ENCODE measurements at regions of chr12 and their contacts with region 1.

Region 1: GRCh38 chr12:100154474-100155247 is 12.0 kb upstream of the BLTP3B start:
- DNase-seq: peak; percentile 53 to 70 (median 57)
- H3K4me3 ChIP-seq: no peak overlapping the region
- H3K4me3 Mint-ChIP-seq: no peak overlapping the region
- H3K27ac ChIP-seq: no peak overlapping the region
- H3K27ac Mint-ChIP-seq: peak overlapping the region in 1 of 7 donors; percentile 39
- H3K4me1 ChIP-seq: no peaks in the 10 kb centered on the region
- H3K4me1 Mint-ChIP-seq: peaks cover 3 to 7% (median 4%) of the 10 kb centered on the region in 4 donors
- H3K27me3 ChIP-seq: no peaks in the 10 kb centered on the region
- H3K27me3 Mint-ChIP-seq: no peaks in the 10 kb centered on the region

Region 2: GRCh38 chr12:100105661-100106060 is 49.0 kb before region 1 on chr12:
- CTCF ChIA-PET with region 1: no interaction called
- POLR2A ChIA-PET with region 1: no interaction called
- intact Hi-C with region 1: no loop called
- DNase-seq: no peak
- H3K4me3 ChIP-seq: no peak overlapping the region
- H3K4me3 Mint-ChIP-seq: no peak overlapping the region
- H3K27ac ChIP-seq: no peak overlapping the region
- H3K27ac Mint-ChIP-seq: peak overlapping the region in 1 of 7 donors; percentile 16
- H3K4me1 ChIP-seq: no peaks in the 10 kb centered on the region
- H3K4me1 Mint-ChIP-seq: peaks cover 5 to 12% (median 5%) of the 10 kb centered on the region in 4 donors
- H3K27me3 ChIP-seq: no peaks in the 10 kb centered on the region
- H3K27me3 Mint-ChIP-seq: no peaks in the 10 kb centered on the region

Region 3: GRCh38 chr12:100142851-100143559 is 11.7 kb before region 1 on chr12 and contains the start of gene BLTP3B:
- CTCF ChIA-PET with region 1: interaction called, 28 read pairs
- POLR2A ChIA-PET with region 1: no interaction called
- intact Hi-C with region 1: no loop called
- DNase-seq: peak; percentile 81 to 88 (median 85)
- H3K4me3 ChIP-seq: peak within 1 kb of the TSS; percentile 66 to 85
- H3K4me3 Mint-ChIP-seq: peak within 1 kb of the TSS; percentile 89 to 98 (median 96)
- H3K27ac ChIP-seq: peak within 1 kb of the TSS; percentile 85
- H3K27ac Mint-ChIP-seq: peak within 1 kb of the TSS; percentile 90 to 97 (median 97)
- H3K4me1 ChIP-seq: peaks cover 22% of the 10 kb centered on the region
- H3K4me1 Mint-ChIP-seq: peaks cover 28 to 42% (median 34%) of the 10 kb centered on the region in 4 donors
- H3K27me3 ChIP-seq: no peaks in the 10 kb centered on the region
- H3K27me3 Mint-ChIP-seq: no peaks in the 10 kb centered on the region
- total RNA-seq, gene BLTP3B: 16.2 to 16.8 TPM

Region 4: GRCh38 chr12:100170313-100170858 is 15.7 kb after region 1 on chr12:
- CTCF ChIA-PET with region 1: interaction called, 64 read pairs
- POLR2A ChIA-PET with region 1: interaction called, 3 read pairs
- intact Hi-C with region 1: no loop called
- DNase-seq: no peak
- H3K4me3 ChIP-seq: no peak overlapping the region
- H3K4me3 Mint-ChIP-seq: no peak overlapping the region
- H3K27ac ChIP-seq: no peak overlapping the region
- H3K27ac Mint-ChIP-seq: no peak overlapping the region
- H3K4me1 ChIP-seq: no peaks in the 10 kb centered on the region
- H3K4me1 Mint-ChIP-seq: peaks cover 0 to 2% (median 0%) of the 10 kb centered on the region in 4 donors
- H3K27me3 ChIP-seq: no peaks in the 10 kb centered on the region
- H3K27me3 Mint-ChIP-seq: no peaks in the 10 kb centered on the region

Region 5: GRCh38 chr12:100189636-100190394 is 35.2 kb after region 1 on chr12:
- CTCF ChIA-PET with region 1: interaction called, 24 read pairs
- POLR2A ChIA-PET with region 1: no interaction called
- intact Hi-C with region 1: no loop called
- DNase-seq: no peak
- H3K4me3 ChIP-seq: no peak overlapping the region
- H3K4me3 Mint-ChIP-seq: no peak overlapping the region
- H3K27ac ChIP-seq: no peak overlapping the region
- H3K27ac Mint-ChIP-seq: peak overlapping the region in 1 of 7 donors; percentile 53
- H3K4me1 ChIP-seq: no peaks in the 10 kb centered on the region
- H3K4me1 Mint-ChIP-seq: peaks cover 0 to 8% (median 5%) of the 10 kb centered on the region in 4 donors
- H3K27me3 ChIP-seq: no peaks in the 10 kb centered on the region
- H3K27me3 Mint-ChIP-seq: no peaks in the 10 kb centered on the region